Activated T-helper 2 cell treated with anti-CD3 and anti-CD28 coated beads, Interferon-gamma antibody, Interleukin-2, Interleukin-4, amounts not matched to agents 10 μg/mL and 5 μg/mL and 100 μg/mL, durations not matched to agents 14 hours and 24 hours and 36 hours (primary cell): ENCODE measurements at regions of chr9 and their contacts with region 1.

Region 1: DNA sequence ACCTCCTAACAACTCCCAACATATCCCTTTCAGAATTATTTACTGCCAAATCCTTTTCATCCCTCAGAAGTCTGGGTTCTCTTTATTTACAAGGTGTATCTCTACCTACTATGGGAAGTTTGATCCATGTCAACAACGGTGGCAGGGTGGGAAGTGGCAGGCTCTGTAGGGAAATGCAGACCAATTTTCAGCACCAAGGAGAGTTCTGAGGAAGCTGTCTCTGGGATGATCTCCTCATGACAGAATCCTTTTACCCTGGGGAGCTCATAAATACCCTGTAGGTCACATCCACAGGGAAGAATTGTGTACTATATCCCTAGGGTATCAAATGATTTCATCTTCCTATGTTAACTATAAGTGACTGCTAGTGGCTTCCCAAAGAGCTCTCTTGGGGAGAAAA is 107.8 kb upstream of the NEK6 start:
- DNase-seq: no peak
- H3K4me3 Mint-ChIP-seq: no peak overlapping the region
- H3K27ac Mint-ChIP-seq: no peak overlapping the region
- H3K4me1 Mint-ChIP-seq: peaks cover 11% of the 10 kb centered on the region
- H3K27me3 Mint-ChIP-seq: peaks cover 31% of the 10 kb centered on the region

Region 2: DNA sequence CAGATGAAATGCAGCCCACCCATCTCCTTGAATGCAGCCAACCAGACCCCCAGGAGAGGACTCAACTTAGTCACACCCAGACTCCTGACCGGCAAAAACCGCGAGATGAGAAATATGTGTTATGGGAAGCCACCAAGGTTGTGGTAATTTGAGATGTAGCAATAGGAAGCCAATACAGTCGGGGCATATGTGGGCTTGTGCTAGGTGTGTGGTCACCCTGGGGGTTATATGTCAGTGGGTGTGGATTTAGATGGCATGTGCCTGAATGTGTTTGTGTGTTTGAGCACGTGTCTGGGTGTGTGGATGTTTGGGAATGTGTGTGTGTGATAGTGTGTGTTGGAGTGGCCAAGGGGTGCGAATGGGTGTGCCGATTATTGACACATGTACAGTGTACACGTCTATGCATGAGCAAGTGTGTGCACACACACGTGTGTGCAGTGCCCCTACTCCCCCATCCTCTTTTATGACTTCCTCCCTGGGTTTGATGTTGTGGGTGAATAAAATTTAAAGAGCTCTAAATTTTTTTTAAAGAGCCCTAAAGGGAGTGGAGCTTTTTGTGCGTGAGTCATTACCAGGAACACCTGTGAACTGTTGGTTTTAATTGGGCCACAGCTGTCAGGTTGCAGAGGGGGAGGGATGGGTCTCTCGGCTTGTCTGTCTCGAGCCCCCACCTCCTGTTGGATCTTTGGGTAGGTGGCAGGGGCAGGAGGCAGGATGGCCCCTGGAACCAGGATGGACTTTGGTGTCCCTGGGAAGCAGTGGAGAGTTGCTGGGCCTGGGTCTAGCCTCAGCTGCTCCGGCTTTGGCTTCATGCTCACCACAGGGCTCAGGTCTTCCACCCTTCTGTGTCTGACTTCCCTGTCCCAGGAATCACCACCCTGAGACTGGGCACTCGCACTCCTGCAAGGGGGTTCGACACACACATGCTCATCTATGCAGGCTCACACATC is 51.6 kb before region 1 on chr9:
- intact Hi-C with region 1: no loop called
- DNase-seq: no peak
- H3K4me3 Mint-ChIP-seq: no peak overlapping the region
- H3K27ac Mint-ChIP-seq: no peak overlapping the region
- H3K4me1 Mint-ChIP-seq: no peaks in the 10 kb centered on the region
- H3K27me3 Mint-ChIP-seq: peaks cover 6% of the 10 kb centered on the region

Region 3: GRCh38 chr9:124188331-124189110 is 38.5 kb after region 1 on chr9:
- intact Hi-C with region 1: loop called (anchors 5 kb)
- DNase-seq: no peak
- H3K4me3 Mint-ChIP-seq: no peak overlapping the region
- H3K27ac Mint-ChIP-seq: no peak overlapping the region
- H3K4me1 Mint-ChIP-seq: peaks cover 13% of the 10 kb centered on the region
- H3K27me3 Mint-ChIP-seq: peaks cover 10% of the 10 kb centered on the region